PC-3 (cell line): ENCODE measurements at regions of chr18 and their contacts with region 1.

Region 1: DNA sequence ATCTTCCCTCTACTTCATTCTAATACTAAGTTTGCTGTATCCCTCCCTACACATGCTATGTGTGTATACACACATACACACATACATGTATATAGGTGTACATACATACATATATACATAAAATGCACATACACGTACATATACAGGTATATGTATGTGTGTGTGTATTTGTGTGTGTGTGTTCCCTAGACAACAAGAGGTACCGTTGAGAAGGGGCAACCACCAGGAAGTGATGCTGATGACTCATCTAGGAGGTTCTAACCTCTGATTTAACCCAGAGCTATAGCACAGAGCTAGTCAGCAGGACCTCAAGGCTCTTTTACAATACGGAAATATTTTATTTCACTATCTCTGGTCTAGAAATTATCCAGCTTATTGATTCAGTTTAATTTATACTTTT is 139.2 kb downstream of the LAMA3 start:
- DNase-seq: peak; percentile 88
- ATAC-seq: peak; percentile 94
- H3K4me3 ChIP-seq: no peak overlapping the region
- H3K27ac ChIP-seq: peak overlapping the region; percentile 79
- H3K4me1 ChIP-seq: peaks cover 25% of the 10 kb centered on the region
- H3K27me3 ChIP-seq: no peaks in the 10 kb centered on the region
- CTCF ChIP-seq: no peak

Region 2: DNA sequence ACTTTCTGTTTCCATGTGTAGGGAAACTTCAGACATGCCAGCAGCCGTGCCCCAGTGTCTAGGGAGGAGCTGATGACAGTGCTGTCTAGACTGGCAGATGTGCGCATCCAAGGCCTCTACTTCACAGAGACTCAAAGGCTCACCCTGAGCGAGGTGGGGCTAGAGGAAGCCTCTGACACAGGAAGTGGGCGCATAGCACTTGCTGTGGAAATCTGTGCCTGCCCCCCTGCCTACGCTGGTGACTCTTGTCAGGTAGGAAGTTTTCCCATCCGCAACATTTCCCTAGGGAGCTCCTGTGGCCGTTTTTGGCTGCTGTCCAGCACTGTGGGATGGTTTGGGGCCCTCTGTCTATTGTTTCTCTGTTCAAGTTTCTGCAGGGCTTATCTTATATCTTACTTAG is 43.0 kb after region 1 on chr18:
- CTCF ChIA-PET with region 1: no interaction called
- POLR2A ChIA-PET with region 1: no interaction called
- intact Hi-C with region 1: loop called (anchors 2 kb)
- DNase-seq: peak; percentile 89
- ATAC-seq: peak; percentile 42
- H3K4me3 ChIP-seq: peak overlapping the region; percentile 14; the same call in 1 of the 2 replicates
- H3K27ac ChIP-seq: peak overlapping the region; percentile 99
- H3K4me1 ChIP-seq: peaks cover 24% of the 10 kb centered on the region
- H3K27me3 ChIP-seq: no peaks in the 10 kb centered on the region
- CTCF ChIP-seq: no peak

Region 3: GRCh38 chr18:23918401-23919032 is 90.1 kb after region 1 on chr18:
- CTCF ChIA-PET with region 1: no interaction called
- POLR2A ChIA-PET with region 1: no interaction called
- intact Hi-C with region 1: loop called (anchors 2 kb)
- DNase-seq: peak; percentile 84
- ATAC-seq: peak; percentile 76
- H3K4me3 ChIP-seq: no peak overlapping the region
- H3K27ac ChIP-seq: no peak overlapping the region
- H3K4me1 ChIP-seq: no peaks in the 10 kb centered on the region
- H3K27me3 ChIP-seq: no peaks in the 10 kb centered on the region
- CTCF ChIP-seq: peak; percentile 88